Caco-2 (cell line): ENCODE measurements at regions of chr5 and their contacts with region 1.

Region 1: DNA sequence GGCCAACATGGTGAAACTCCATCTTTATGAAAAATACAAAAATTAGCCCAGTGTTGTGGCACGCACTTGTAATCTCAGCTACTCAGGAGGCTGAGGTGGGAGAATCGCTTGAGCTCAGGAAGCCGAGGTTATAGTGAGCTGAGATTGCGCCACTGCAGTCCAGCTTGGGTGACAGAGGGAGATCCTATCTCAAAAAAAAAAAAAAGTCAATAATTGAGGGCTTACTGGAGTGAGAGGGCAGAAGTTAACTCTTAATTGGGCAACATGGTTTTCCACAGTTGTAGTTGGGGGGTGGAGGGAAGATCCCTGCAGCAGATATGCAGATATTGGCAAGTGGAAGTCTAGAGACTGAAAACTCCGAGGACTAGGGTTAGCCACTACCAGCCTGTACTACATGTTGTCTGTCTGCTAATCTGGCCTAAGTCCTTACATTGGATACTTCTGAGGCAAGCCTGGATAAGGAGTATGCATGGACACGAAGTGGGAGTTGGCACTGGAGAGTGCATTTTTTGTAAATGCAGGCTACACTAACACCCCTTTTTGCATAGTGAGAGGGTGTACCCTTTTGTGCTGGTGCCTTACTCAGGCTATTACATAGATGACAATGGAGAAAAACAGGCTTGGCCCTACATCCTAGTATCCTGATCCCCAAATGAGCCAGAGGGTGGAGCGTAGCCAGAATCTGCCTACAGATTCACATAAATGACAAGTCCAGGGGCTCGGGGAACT is 89.0 kb upstream of the NIPBL start:
- DNase-seq: peak in 1 of 2 experiments; percentile 6
- H3K4me3 ChIP-seq: no peak overlapping the region
- H3K4me3 Mint-ChIP-seq: no peak overlapping the region
- H3K27ac Mint-ChIP-seq: no peak overlapping the region
- H3K4me1 ChIP-seq: peaks cover 14% of the 10 kb centered on the region; the same call in 1 of the 2 replicates
- H3K4me1 Mint-ChIP-seq: peaks cover 21% of the 10 kb centered on the region
- H3K27me3 ChIP-seq: no peaks in the 10 kb centered on the region
- H3K27me3 Mint-ChIP-seq: peaks cover 7% of the 10 kb centered on the region
- CTCF ChIP-seq: no peak

Region 2: GRCh38 chr5:36744773-36745589 is 42.5 kb before region 1 on chr5:
- CTCF ChIA-PET with region 1: interaction called, 3 read pairs
- POLR2A ChIA-PET with region 1: no interaction called
- intact Hi-C with region 1: loop called (anchors 2 kb)
- DNase-seq: peak; percentile 93 to 94
- H3K4me3 ChIP-seq: peak overlapping the region; percentile 63
- H3K4me3 Mint-ChIP-seq: peak overlapping the region; percentile 98
- H3K27ac Mint-ChIP-seq: peak overlapping the region; percentile 57
- H3K4me1 ChIP-seq: peaks cover 12% of the 10 kb centered on the region
- H3K4me1 Mint-ChIP-seq: peaks cover 15% of the 10 kb centered on the region
- H3K27me3 ChIP-seq: no peaks in the 10 kb centered on the region; the same call in 1 of the 2 replicates
- H3K27me3 Mint-ChIP-seq: peaks cover 11% of the 10 kb centered on the region
- CTCF ChIP-seq: peak in 1 of 2 experiments; percentile 82

Region 3: GRCh38 chr5:36770125-36770524 is 17.4 kb before region 1 on chr5:
- CTCF ChIA-PET with region 1: no interaction called
- POLR2A ChIA-PET with region 1: no interaction called
- intact Hi-C with region 1: no loop called
- DNase-seq: no peak
- H3K4me3 ChIP-seq: no peak overlapping the region
- H3K4me3 Mint-ChIP-seq: no peak overlapping the region
- H3K27ac Mint-ChIP-seq: no peak overlapping the region
- H3K4me1 ChIP-seq: no peaks in the 10 kb centered on the region
- H3K4me1 Mint-ChIP-seq: no peaks in the 10 kb centered on the region
- H3K27me3 ChIP-seq: no peaks in the 10 kb centered on the region
- H3K27me3 Mint-ChIP-seq: peaks cover 3% of the 10 kb centered on the region
- CTCF ChIP-seq: no peak